Panc1 (cell line): ENCODE measurements at regions of chr11 and their contacts with region 1.

Region 1: DNA sequence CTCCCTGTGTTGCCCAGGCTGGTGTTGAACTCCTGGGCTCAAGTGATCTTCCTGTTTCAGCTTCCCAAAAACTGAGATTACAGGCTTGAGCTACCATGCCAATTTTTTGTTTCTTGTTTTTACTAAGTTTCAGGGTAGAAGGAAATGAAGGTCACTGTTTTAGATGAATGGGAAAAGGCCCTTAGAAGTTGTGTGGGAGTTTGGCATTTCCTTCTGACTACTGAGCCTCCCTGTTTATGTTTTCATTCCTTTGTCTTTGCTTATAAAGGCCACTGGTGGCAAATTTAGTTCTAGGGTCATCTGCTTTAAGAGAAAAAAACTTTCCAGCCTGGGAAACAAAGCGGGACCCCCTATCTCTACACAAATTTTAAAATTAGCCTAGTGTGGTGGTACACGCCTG is 22.1 kb downstream of the SRPRA start:
- DNase-seq: no peak
- ATAC-seq: no peak
- H3K4me3 ChIP-seq: no peak overlapping the region
- H3K27ac ChIP-seq: no peak overlapping the region
- H3K4me1 ChIP-seq: no peaks in the 10 kb centered on the region
- H3K27me3 ChIP-seq: no peaks in the 10 kb centered on the region
- CTCF ChIP-seq: no peak

Region 2: GRCh38 chr11:126102436-126102981 is 144.1 kb before region 1 on chr11:
- CTCF ChIA-PET with region 1: no interaction called
- POLR2A ChIA-PET with region 1: interaction called, 10 read pairs
- in situ Hi-C with region 1: no loop called
- intact Hi-C with region 1: no loop called
- DNase-seq: no peak
- ATAC-seq: no peak
- H3K4me3 ChIP-seq: no peak overlapping the region
- H3K27ac ChIP-seq: no peak overlapping the region
- H3K4me1 ChIP-seq: no peaks in the 10 kb centered on the region; the same call in 1 of the 2 replicates
- H3K27me3 ChIP-seq: no peaks in the 10 kb centered on the region
- CTCF ChIP-seq: no peak

Region 3: DNA sequence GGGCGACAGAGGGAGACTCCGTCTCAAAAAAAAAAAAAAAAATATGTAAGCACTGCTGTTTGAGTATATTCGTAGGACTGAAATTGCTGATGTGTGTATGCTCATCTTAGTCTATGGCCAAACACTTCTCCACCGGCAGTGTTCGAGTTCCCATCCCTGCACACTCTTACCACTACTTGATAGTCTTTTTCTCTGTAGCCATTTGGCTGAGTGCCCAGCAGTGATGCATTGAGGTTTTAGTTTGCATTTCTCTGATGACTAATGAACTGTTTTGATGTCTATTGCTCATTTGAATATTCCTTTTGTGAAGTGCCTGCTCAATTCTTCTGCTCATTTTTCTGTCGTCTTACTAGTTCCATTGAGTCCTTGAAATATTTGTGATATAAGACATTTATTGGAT is 38.2 kb after region 1 on chr11:
- CTCF ChIA-PET with region 1: no interaction called
- POLR2A ChIA-PET with region 1: no interaction called
- in situ Hi-C with region 1: no loop called
- intact Hi-C with region 1: no loop called
- DNase-seq: peak; percentile 94
- ATAC-seq: no peak
- H3K4me3 ChIP-seq: peak overlapping the region in 1 of 2 experiments; percentile 97; a peak in 1 of 4 replicates
- H3K27ac ChIP-seq: no peak overlapping the region
- H3K4me1 ChIP-seq: peaks cover 11% of the 10 kb centered on the region; the same call in 1 of the 2 replicates
- H3K27me3 ChIP-seq: no peaks in the 10 kb centered on the region
- CTCF ChIP-seq: no peak